Posterior vena cava (tissue), 2 donors: ENCODE measurements at regions of chr19 and their contacts with region 1.

Region 1: GRCh38 chr19:48768994-48769713 is 13.8 kb downstream of the FGF21 start:
- DNase-seq: no peak

Region 2: DNA sequence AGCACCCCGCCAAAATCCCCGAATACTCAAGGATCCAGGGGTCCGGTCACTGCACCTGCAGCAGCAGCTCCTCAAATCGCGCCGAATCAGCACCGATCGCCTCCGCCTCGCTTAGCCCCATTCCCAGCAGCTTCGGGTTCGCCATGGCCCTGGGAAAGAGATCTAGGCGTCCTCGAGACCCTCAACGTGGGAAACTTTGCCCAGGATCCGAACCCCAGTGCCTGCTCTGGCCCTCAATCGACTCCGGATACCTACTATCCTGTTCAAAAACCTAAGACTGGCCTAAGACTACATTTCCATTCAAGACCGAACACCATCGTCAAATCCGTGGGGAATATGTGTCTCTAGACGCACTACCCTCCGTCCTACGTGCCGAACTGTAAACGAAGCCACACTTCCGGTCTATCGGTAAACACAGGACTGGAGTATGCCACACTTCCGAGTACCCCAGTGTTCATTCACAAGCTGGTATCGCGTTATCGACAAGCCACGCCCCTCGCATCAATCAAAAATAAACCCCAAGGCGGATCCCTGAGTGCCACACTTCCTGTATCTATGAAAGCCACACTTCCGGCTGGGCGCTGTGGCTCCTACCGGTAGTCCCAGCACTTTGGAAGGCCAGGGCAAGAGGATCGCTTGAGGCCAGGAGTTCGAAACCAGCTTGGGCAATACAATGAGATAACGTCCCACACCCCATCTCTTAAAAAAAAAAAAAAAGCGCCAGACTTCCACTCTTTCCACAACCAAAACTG is 682.5 kb after region 1 on chr19 and contains the start of gene PIH1D1:
- intact Hi-C with region 1: loop called in 1 of 2 experiments (anchors 5 kb)
- DNase-seq: peak; percentile 98
- total RNA-seq, gene PIH1D1: 34.4 to 36.6 TPM